ENCODE measurements at regions of chr11 and their contacts with region 1.

Region 1: DNA sequence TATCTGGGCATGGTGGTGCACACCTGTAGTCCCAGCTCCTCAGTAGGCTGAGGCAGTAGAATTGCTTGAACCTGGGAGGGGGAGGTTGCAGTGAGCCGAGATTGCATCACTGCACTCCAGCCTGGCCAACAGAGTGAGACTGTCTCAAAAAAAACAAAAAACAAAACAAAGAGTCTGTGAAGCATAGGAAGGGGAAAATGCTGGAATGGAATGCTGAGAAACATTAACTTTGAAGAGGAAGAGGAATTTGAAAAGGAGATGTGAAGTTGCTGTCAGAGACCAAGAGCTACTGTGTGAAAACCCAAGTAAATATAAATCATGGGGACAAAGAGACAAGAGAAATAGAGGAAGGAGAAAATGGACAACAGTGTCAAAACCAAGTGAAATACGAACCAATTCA is 455.1 kb upstream of the ARHGAP42 start:
- DNase-seq: no peak
- H3K4me3 ChIP-seq: no peak overlapping the region
- H3K27ac ChIP-seq: no peak overlapping the region
- H3K4me1 ChIP-seq: peaks cover 13% of the 10 kb centered on the region
- H3K27me3 ChIP-seq: no peaks in the 10 kb centered on the region
- CTCF ChIP-seq: no peak

Region 2: DNA sequence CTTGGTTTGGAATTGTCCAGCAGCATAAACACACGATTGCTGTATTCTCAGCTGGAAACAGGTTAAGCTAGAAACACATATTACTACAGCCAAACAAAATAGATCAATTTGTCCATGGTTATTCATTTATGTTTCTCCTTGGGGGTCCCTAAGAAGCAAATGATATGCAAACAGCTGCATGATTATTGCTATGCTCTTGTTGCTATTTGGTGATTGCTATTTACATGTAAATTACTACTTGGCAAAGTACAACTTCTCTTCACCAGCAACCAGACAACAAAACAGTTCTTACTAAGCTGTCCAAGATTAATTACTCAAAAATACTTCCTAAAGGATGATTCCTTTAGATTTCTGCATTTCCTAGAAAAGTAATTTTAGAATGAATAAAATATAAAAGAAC is 112.8 kb before region 1 on chr11:
- CTCF ChIA-PET with region 1: no interaction called
- POLR2A ChIA-PET with region 1: no interaction called
- intact Hi-C with region 1: loop called (anchors 5 kb)
- DNase-seq: peak; percentile 55
- H3K4me3 ChIP-seq: no peak overlapping the region
- H3K27ac ChIP-seq: no peak overlapping the region
- H3K4me1 ChIP-seq: peaks cover 26% of the 10 kb centered on the region
- H3K27me3 ChIP-seq: no peaks in the 10 kb centered on the region
- CTCF ChIP-seq: no peak

Measured in A673 (cell line).